HEK293 (cell line): ENCODE measurements at regions of chr5 and their contacts with region 1.

Region 1: DNA sequence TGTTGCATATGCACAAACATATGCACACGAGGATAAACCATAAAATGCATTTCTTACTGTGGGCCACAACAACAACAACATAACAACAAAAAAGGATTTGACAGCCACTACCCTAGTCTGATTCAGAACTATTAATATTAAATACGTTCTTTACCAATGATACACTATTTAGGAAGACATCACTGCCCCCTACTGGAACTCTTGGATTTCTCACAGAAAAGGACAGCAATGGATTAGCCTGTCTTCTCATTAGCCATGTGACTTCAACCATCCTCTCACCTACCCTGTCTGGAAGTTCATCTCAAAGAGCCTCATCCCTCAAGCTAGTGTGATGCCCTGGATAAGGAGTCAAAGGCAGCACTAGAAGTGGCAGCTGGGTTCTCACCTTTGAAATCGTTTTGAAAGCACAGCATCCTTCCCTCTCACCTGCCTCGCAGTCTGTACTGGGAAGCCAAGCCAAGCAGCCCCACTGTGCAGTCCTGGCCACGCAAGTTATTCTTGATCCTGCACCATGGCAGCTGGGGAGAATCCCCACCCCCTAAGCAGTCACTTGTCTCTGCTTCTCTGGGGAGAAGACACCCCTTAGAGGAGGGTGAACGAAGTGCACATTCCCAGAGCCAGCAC is 64.6 kb downstream of the SH3TC2 start:
- H3K4me3 ChIP-seq: no peak overlapping the region
- H3K27ac ChIP-seq: no peak overlapping the region
- H3K4me1 ChIP-seq: no peaks in the 10 kb centered on the region
- CTCF ChIP-seq: peak; percentile 28; the same call in 1 of the 2 replicates

Region 2: GRCh38 chr5:148805326-148806290 is 192.7 kb before region 1 on chr5:
- CTCF ChIA-PET with region 1: no interaction called
- POLR2A ChIA-PET with region 1: no interaction called
- H3K4me3 ChIP-seq: no peak overlapping the region
- H3K27ac ChIP-seq: no peak overlapping the region; the same call in 1 of the 2 replicates
- H3K4me1 ChIP-seq: peaks cover 29% of the 10 kb centered on the region
- CTCF ChIP-seq: no peak

Region 3: DNA sequence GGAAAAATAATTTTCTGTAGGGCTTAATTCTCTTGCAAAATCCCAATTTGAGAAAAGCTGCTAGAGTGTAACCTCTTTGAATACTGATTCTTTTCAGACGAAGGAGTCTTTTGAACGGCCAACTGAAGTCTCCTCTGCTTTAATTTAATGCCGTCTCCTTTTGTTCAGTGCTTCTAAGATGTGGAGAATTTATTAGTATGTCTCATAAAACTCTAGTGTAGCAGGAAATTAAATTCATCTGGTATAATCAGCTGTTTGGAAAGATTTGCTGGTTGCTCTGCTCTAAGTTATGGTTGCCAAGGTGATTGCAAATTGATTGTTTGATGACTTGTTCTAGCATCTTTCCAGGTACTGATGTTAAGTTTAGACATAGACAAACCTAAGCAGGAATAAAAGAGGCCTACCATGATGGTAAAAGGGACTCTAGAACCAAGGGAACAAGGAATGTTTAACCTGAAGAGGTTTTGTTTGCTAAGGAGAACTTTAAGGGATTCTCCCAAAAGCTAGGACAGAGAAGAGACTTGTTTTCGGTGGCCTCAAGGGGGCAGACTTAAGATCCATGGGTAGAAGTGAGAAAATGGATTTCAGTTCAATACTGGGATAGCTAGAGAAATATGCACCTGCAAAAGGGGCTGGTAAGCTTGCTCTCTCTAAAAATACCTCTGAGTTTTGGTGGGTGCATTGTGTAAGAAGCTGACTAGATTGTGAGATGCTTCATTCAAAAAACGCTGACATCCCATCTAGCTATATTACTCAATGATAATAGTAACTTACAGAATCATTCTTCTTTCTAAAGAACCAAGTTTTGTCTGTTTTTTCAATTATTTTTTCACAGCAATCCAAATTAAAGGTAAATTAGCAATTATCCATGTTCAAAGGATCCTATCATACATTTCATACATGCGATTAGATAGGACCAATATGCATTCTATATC is 177.6 kb before region 1 on chr5:
- CTCF ChIA-PET with region 1: interaction called, 10 read pairs
- POLR2A ChIA-PET with region 1: no interaction called
- H3K4me3 ChIP-seq: no peak overlapping the region
- H3K27ac ChIP-seq: no peak overlapping the region
- H3K4me1 ChIP-seq: peaks cover 5% of the 10 kb centered on the region; the same call in 1 of the 2 replicates
- CTCF ChIP-seq: peak; percentile 32

Region 4: DNA sequence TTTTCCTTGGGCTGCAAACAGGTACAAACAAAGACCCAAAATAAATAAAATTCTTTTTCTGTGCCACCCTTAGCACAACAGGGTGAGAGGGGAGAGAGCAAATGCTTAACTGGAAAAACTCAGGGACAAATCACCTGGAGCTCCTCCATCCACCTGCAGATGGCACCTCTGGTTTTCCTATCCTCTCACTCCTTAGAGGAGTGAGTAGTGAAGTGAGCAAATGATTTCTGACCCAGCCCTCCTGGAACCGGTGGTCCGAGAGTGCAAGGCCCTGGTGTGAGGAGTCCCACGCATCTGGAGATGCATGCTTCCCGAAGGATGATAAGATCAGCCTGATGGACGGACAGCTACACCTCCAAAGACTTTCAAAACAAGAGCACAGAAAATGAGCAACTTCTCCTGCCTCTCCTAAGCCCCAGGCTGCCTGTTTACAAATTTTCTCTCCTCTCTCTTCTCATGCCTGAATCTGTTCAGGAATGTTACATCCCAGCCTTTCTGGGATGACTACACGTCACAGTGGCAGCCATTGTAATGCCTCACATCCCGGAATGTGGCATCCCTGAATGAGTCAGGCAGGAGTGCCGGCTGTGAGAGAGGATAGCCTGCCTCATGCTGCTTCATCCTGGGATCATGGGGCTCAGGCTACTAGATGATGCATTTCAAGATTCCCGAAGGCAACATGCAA is 85.4 kb before region 1 on chr5:
- CTCF ChIA-PET with region 1: interaction called, 12 read pairs
- POLR2A ChIA-PET with region 1: no interaction called
- H3K4me3 ChIP-seq: no peak overlapping the region
- H3K27ac ChIP-seq: no peak overlapping the region
- H3K4me1 ChIP-seq: no peaks in the 10 kb centered on the region
- CTCF ChIP-seq: peak; percentile 22; the same call in 1 of the 2 replicates

Region 5: DNA sequence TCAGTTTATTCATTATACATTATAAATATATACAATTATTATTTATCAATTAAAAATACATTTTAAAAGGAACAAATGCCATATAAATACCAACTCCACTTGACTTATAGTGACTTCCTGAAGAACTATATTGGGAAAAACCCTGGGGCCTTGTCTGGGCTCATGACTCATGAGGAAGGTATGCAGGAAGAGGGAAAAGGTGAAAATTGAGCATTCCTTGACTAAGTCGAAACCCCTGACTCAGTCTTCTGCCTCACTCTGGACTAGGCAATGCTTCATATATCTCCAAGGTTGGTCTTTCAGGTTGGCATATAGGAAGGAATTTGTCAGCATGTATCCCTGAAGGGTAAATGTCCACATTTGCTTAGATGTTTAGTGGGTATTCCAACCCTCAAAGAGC is 14.0 kb before region 1 on chr5:
- CTCF ChIA-PET with region 1: interaction called, 21 read pairs
- POLR2A ChIA-PET with region 1: no interaction called
- H3K4me3 ChIP-seq: no peak overlapping the region
- H3K27ac ChIP-seq: no peak overlapping the region
- H3K4me1 ChIP-seq: peaks cover 2% of the 10 kb centered on the region; the same call in 1 of the 2 replicates
- CTCF ChIP-seq: no peak